Right lobe of liver (tissue), 6 donors: ENCODE measurements at regions of chr17 and their contacts with region 1.

Region 1: GRCh38 chr17:59311130-59311920 is 20.1 kb upstream of the YPEL2 start:
- DNase-seq: peak in 1 of 3 donors; percentile 50
- ATAC-seq: peak; percentile 97 to 100 (median 99)
- H3K4me3 ChIP-seq: no peak overlapping the region
- H3K27ac ChIP-seq: no peak overlapping the region
- H3K4me1 ChIP-seq: peaks cover 0 to 5% (median 0%) of the 10 kb centered on the region in 4 donors
- H3K27me3 ChIP-seq: no peaks in the 10 kb centered on the region
- CTCF ChIP-seq: peak; percentile 84 to 96 (median 86)
- POLR2A ChIP-seq: no peak

Region 2: DNA sequence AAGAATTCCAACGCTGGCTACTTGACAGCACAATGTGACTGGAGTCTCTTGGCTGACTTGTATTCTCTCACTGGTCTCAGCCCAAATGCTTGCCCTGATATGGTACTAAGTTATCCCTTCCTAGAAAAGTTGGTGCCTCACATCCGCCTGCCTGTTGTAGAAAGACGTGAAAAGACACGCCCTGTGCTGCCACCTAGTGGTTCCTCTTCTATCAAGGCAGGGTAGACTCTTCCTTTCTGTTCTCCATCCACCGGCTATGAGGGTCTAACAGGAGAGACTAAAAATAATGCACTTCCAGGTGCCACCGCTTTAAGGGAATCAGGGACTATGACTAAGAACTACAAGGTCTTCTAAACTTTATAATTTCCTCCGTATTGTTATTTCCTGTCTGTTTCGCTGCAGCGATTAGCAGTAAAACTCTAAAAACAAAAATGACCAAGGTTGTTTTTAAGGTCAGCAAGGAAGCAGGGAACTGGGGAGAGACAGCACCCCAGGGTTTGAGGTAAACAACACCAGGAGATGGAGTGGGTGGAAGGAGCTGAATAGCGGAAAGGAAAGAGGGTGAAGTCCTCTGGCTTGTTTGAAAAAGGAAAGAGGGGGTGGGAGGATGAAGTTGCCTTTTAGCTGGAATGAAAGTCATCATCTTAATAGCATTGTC is 129.6 kb after region 1 on chr17:
- intact Hi-C with region 1: loop called in 1 of 2 experiments (anchors 5 kb)
- DNase-seq: peak; percentile 82 to 89 (median 83)
- ATAC-seq: peak; percentile 91 to 96 (median 95)
- H3K4me3 ChIP-seq: no peak overlapping the region
- H3K27ac ChIP-seq: peak overlapping the region; percentile 24 to 58 (median 30)
- H3K4me1 ChIP-seq: peaks cover 0 to 22% (median 13%) of the 10 kb centered on the region in 4 donors
- H3K27me3 ChIP-seq: no peaks in the 10 kb centered on the region
- CTCF ChIP-seq: peak; percentile 85 to 91 (median 88)
- POLR2A ChIP-seq: no peak

Region 3: DNA sequence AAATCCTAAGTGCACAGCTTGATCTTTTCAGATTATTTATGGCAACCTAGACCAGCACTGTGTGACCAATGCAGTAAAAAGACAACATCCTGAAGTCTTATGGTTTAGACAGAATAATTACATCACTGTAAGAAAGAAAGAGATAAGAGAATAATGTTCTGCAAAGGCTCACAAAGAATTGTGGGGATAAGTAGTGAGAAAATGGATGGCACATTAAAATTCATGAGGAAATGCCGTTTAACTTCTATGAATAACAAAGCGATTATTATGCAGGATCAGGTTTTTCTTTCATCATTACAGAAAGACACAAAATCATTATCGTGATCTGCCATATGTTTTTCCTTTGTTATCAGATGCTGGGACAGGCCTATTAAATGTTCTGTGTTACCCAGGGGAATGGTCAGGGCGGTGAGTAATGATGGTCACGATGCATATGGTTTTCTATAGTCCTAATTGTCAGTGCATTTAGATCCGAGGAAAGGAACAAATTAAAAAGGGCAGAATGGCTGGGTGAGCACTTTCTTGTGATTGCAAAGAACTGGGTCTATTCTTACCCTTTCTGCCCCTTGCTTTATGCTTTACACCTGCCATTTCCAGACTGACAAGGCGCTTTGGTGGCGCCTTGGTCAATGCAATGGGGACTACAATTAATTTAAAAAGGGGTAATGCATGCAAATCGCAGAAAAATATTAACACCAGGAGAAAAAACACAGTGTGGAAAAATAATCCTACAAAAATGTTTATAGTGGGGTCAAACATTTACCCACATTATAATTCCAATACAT is 236.0 kb after region 1 on chr17:
- intact Hi-C with region 1: loop called in 1 of 2 experiments (anchors 10 kb)
- DNase-seq: no peak
- ATAC-seq: no peak
- H3K4me3 ChIP-seq: no peak overlapping the region
- H3K27ac ChIP-seq: no peak overlapping the region
- H3K4me1 ChIP-seq: no peaks in the 10 kb centered on the region
- H3K27me3 ChIP-seq: no peaks in the 10 kb centered on the region
- CTCF ChIP-seq: no peak
- POLR2A ChIP-seq: no peak